Mucosa of descending colon (tissue), 3 donors: ENCODE measurements at regions of chr14 and their contacts with region 1.

Region 1: DNA sequence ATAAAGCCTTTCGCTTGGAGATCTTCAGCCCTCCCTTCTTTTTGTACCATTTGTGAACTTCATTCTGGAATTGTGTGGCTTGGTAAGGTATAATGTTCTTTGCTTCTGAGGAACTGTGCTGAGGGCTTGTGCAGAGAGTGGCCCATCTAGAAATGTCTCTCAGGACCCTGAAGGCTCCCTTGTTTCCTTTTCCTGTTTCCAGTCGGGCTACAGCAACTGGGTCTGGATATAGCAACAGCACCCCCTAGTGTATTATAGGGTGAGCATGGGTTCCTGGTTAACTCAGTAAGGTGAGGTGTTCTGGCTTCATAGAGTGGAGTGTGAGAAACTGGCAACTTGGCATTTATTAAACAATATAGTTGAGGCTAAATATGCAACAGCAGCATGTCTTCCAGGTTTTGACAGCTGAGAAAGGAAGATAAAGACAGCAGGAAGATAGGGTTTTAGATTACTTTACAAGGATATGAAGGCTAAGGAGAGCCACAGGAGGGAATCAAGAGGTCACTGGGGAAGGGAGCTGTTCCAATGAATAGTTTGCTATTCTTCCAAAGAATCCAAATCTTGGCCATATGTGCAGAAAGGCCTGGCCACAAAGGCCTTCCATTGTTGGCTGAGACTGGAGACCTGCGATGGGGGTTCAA is 49.1 kb upstream of the RNU6-8 start:
- DNase-seq: peak in 1 of 3 donors; percentile 80
- ATAC-seq: peak; percentile 93
- H3K4me3 ChIP-seq: no peak overlapping the region
- H3K4me1 ChIP-seq: peaks cover 5% of the 10 kb centered on the region
- CTCF ChIP-seq: peak; percentile 56

Region 2: DNA sequence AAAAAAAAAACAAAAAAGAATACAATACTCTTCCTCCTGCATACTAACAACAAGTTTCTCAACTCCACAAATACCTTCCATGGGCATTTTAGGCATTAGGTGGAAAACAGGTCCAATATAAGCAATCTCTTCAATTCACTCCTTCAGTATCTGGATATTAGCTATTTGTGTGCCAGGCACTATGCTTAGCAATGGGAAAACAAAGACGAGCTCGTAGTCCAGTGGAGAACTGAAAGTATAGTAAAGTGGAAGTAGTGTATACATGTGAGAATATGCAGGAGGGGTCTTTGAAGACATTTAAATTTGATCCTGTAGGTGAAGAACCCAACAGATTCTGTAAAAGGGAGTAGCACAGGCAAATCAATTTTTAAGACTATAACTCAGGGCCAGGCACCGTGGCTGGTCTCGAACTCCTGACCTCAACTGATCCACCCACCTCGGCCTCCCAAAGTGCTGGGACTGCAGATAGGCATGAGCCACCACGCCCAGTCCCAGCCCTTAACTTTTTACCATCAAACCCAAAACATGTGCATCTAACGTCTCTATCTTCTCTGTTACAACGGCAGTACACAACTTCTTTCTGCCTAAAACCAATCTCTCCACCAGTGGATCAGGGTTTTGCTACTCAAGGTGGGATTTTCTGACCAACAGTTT is 1055.2 kb before region 1 on chr14:
- intact Hi-C with region 1: no loop called
- DNase-seq: no peak
- ATAC-seq: no peak
- H3K4me3 ChIP-seq: no peak overlapping the region
- H3K4me1 ChIP-seq: peaks cover 6% of the 10 kb centered on the region
- CTCF ChIP-seq: no peak

Region 3: GRCh38 chr14:31510222-31510621 is 741.9 kb before region 1 on chr14:
- intact Hi-C with region 1: no loop called
- DNase-seq: no peak
- ATAC-seq: no peak
- H3K4me3 ChIP-seq: no peak overlapping the region
- H3K4me1 ChIP-seq: no peaks in the 10 kb centered on the region
- CTCF ChIP-seq: peak; percentile 12

Region 4: GRCh38 chr14:31926123-31926522 is 326.0 kb before region 1 on chr14:
- intact Hi-C with region 1: loop called in 1 of 2 experiments (anchors 5 kb)
- DNase-seq: peak in 1 of 3 donors; percentile 27
- ATAC-seq: peak; percentile 72
- H3K4me3 ChIP-seq: no peak overlapping the region
- H3K4me1 ChIP-seq: peaks cover 5% of the 10 kb centered on the region
- CTCF ChIP-seq: no peak

Region 5: DNA sequence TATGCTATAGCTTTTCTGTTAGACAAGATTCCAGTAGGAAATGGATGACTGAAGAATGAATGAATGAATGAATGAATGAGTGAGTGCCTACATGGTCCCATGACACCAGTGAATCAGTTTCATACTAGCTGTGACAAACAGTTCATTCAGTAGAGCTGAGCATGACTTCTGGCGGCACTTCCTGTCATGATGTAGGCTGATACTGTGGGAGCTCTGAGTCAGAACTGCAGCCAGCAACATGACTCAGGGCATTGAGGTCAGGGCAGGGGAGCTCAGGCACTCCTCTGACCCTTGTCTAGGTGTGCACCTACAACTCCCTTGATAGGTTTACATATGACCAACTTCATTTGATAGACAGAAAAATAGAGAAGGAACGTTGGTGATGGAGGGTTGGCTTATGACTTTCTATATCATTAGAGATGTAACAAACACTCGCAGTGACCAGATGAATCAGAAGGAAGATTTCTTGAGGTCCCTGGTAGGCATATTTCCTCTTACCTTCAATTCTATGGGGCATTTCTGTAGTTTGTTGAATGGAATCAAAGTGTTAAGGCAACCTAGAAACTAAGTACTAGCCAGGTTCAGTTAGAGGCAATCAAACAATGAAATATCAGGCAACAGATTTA is 314.3 kb before region 1 on chr14:
- intact Hi-C with region 1: loop called in 1 of 2 experiments (anchors 5 kb)
- DNase-seq: peak; percentile 48 to 67 (median 58)
- ATAC-seq: peak; percentile 91
- H3K4me3 ChIP-seq: no peak overlapping the region
- H3K4me1 ChIP-seq: peaks cover 11% of the 10 kb centered on the region
- CTCF ChIP-seq: no peak

Region 6: GRCh38 chr14:32076278-32077080 is 175.7 kb before region 1 on chr14:
- intact Hi-C with region 1: loop called (anchors 2 to 5 kb)
- DNase-seq: peak; percentile 95 to 98 (median 96)
- ATAC-seq: peak; percentile 89
- H3K4me3 ChIP-seq: peak overlapping the region; percentile 99
- H3K4me1 ChIP-seq: peaks cover 28% of the 10 kb centered on the region
- CTCF ChIP-seq: no peak

Region 7: GRCh38 chr14:32190672-32191071 is 61.5 kb before region 1 on chr14:
- intact Hi-C with region 1: no loop called
- DNase-seq: no peak
- ATAC-seq: peak; percentile 75
- H3K4me3 ChIP-seq: no peak overlapping the region
- H3K4me1 ChIP-seq: no peaks in the 10 kb centered on the region
- CTCF ChIP-seq: no peak